ENCODE measurements at regions of chr17 and their contacts with region 1.

Region 1: GRCh38 chr17:20009302-20010098 is at the start of gene SPECC1:
- DNase-seq: peak; percentile 65 to 99
- H3K4me3 ChIP-seq: peak within 1 kb of the TSS; percentile 54 to 88 (median 80)
- H3K27ac ChIP-seq: no peak within 1 kb of the TSS
- H3K4me1 ChIP-seq: peaks cover 0 to 8% (median 3%) of the 10 kb centered on the region in 4 experiments; a peak in 4 of 7 replicates
- H3K27me3 ChIP-seq: peaks cover 0 to 3% (median 0%) of the 10 kb centered on the region in 4 experiments; a peak in 1 of 7 replicates
- CTCF ChIP-seq: peak; percentile 86 to 98 (median 88)
- EP300 ChIP-seq: peak in 1 of 2 experiments; percentile 13; a peak in 1 of 3 replicates
- POLR2A ChIP-seq: no peak
- RAD21 ChIP-seq: peak; percentile 15 to 47; a peak in 3 of 4 replicates
- total RNA-seq, gene SPECC1: 87.9 and 98.7 TPM in 2 replicates

Region 2: DNA sequence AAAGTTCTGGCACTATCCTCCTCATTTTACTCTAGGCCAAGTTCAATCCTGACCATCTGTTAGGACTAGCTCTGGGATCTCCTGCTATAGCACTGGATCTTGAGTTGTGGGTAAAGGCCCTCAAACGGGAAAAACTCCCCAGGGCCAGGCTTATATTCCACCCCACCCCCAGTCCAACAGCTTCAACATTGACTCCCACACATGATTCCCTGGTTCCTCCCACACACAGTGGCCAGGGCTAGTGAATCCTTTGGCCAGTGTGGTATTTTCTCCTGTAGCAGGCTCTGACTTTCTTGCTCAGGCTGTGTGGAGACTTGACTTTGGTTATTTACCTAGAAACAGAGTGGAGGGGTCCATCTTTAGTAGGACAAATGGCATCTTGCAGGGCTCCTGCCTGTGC is 21.6 kb before region 1 on chr17:
- CTCF ChIA-PET with region 1: interaction called, 35 read pairs
- POLR2A ChIA-PET with region 1: interaction called, 7 read pairs
- DNase-seq: peak in 1 of 2 experiments; percentile 23
- H3K4me3 ChIP-seq: no peak overlapping the region
- H3K27ac ChIP-seq: no peak overlapping the region
- H3K4me1 ChIP-seq: peaks cover 0 to 10% (median 5%) of the 10 kb centered on the region in 4 experiments; a peak in 5 of 7 replicates
- H3K27me3 ChIP-seq: no peaks in the 10 kb centered on the region
- CTCF ChIP-seq: no peak
- EP300 ChIP-seq: no peak
- POLR2A ChIP-seq: no peak
- RAD21 ChIP-seq: no peak

Region 3: GRCh38 chr17:19992803-19993713 is 16.4 kb before region 1 on chr17:
- CTCF ChIA-PET with region 1: interaction called, 35 read pairs
- POLR2A ChIA-PET with region 1: interaction called, 7 read pairs
- DNase-seq: peak; percentile 87 to 93
- H3K4me3 ChIP-seq: peak overlapping the region in 1 of 4 experiments; percentile 36; a peak in 1 of 8 replicates
- H3K27ac ChIP-seq: no peak overlapping the region
- H3K4me1 ChIP-seq: no peaks in the 10 kb centered on the region
- H3K27me3 ChIP-seq: no peaks in the 10 kb centered on the region
- CTCF ChIP-seq: peak; percentile 63 to 97 (median 74)
- EP300 ChIP-seq: no peak
- POLR2A ChIP-seq: no peak
- RAD21 ChIP-seq: peak; percentile 85 to 91

Measured in H1 (cell line).